Calu3 (cell line): ENCODE measurements at regions of chr22 and their contacts with region 1.

Region 1: DNA sequence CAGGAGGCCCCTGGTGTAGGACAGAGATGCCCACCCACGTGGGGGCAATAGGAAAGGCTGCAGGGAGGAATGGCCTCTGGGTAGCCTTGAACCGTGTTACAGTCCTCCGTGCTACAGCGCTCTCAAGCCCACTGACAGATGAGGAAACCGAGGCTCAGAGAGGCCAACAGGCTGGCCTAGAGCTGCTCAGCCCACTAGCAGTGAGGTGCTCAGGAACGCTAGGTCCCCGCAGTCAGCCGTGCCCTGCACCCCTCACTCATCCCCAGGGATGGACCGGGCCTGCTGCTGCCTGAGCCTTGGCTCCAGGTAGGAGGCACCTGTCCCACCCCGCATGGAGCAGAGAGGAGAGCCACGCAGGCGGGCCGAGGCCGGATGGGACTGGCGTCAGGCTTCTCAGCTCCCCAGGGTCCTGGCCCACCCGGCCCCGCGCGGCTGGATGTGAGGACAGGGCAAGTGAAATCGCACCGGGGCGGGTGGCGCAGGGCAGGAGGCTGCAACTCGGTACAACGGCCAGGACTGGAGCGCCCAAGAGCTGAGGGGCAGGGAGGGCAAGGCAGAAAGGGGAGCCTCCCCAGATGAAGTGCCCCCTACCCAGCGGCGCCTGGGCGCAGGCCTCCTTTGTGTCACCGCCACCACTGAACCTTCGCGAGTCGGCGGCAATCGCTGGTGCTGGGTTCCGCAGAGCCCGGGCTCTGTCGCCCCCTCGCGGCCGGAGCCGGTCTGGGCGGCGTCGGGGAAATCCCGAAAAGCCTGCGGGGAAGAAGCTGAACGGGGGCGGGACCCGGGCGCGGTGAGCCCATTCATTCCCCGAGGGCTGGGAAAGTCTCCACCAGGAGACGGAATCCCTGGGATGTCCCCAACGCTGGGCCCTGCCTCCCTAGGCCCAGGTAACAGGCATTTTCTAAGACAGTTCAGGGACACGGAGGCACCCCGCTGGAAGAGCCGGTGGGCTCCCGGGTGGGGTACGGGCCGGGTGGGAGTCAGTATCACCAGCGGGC is 8.4 kb upstream of the SLC2A11 start:
- DNase-seq: peak; percentile 94
- H3K4me3 Mint-ChIP-seq: peak overlapping the region; percentile 70
- H3K27ac Mint-ChIP-seq: no peak overlapping the region
- H3K4me1 Mint-ChIP-seq: no peaks in the 10 kb centered on the region
- H3K27me3 Mint-ChIP-seq: peaks cover 8% of the 10 kb centered on the region
- CTCF ChIP-seq: peak; percentile 95

Region 2: DNA sequence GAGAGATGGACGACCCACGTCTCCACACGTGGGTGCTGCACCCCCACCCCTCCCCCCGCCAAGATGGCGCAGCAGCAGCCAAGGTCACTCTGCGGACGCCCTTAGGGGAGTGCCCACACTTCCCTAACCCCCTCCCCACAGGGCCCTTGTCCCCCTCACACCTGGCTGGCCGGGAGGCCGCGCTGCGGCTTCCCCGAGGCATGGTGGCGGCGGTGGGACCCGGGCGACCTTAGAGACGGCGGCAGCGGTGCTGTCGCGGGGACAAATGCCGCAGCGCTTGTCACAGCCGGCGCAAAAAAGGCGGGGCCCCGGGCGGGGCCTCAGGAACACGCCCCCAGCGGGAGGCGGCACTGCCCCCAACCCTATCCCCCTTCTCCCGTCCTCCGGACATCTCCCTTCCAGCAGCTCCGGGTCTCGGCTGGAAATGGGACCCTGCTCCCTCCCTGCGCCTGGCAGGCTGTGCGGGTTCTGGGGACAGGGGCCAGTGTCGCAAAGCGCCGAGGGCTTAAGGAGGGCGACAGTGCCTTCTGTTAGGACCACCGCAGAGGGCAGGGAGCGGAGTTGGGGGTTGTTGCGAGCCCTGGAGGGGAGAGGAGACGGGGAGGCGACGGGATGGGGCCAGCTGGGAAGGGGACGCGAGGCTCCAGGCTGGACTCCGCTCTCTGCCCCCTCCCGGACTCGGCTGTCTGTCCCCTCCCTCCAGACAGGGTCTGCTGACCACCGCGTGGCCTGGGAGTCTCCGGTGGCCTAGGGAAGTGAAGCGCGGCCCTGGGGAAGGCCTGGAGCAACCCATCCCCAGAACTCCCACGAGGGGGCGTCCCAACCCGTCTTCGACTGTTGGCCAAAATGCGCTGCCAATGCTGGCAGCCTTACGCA is 81.4 kb before region 1 on chr22 and contains the start of gene CHCHD10:
- CTCF ChIA-PET with region 1: interaction called, 20 read pairs
- intact Hi-C with region 1: loop called (anchors 5 kb)
- DNase-seq: peak; percentile 90
- H3K4me3 Mint-ChIP-seq: peak within 1 kb of the TSS; percentile 87
- H3K27ac Mint-ChIP-seq: peak within 1 kb of the TSS; percentile 39
- H3K4me1 Mint-ChIP-seq: peaks cover 13% of the 10 kb centered on the region
- H3K27me3 Mint-ChIP-seq: peaks cover 4% of the 10 kb centered on the region
- CTCF ChIP-seq: peak; percentile 82
- total RNA-seq, gene CHCHD10: 155 and 181 TPM in 2 replicates